ENCODE measurements at regions of chr12 and their contacts with region 1.

Region 1: DNA sequence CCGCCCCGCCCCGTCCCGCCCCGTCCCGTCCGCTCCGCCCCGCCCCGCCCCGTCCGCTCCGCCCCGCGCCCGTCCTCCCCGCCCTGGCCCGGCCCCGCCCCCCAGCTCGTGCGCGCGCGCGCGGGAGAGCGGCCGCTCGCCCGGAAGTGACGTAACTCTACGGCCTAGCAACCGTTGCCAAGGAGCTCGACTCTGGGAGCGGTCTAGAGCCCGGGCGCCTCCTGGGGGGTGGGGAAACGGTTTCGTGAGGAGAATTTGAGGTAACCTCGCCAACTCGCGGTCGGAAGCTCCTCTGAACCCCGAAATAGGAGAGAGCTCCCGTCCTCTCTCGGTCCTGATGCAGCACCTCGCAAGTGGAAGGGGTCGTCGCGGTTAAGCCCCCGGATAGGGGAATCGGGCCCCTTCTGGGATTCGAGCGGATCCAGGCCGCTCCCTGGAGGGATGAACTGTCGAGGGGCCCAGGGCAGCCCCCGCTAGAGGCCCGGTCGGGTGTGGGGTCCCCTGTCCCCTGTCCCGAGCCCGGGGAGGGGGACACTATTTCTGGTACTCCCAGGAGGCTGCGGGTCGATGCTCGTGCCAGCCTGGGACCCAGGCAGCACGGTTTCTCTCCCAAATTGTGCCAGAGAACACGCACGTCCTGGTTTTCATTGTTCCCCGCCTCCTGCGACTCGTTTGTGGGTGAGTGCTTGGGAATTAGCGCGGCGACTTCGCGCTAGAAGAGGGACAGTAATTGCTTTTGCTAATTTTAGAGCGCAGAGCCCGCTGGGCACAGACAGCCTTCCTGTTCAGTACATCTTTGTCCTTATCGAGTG is at the start of gene IFT81:
- DNase-seq: peak; percentile 88 to 97 (median 94)
- H3K4me3 ChIP-seq: peak within 1 kb of the TSS; percentile 66 to 100 (median 95)
- H3K27ac ChIP-seq: peak within 1 kb of the TSS in 58 of 59 donors; percentile 44 to 97 (median 90)
- H3K27me3 ChIP-seq: no peaks in the 10 kb centered on the region
- CTCF ChIP-seq: peak in 22 of 56 donors; percentile 8 to 52 (median 22)
- total RNA-seq, gene IFT81: 12.0 to 29.3 (median 19.0) TPM

Region 2: GRCh38 chr12:110224379-110225304 is 100.3 kb after region 1 on chr12:
- intact Hi-C with region 1: loop called in 1 of 2 experiments (anchors 5 kb)
- DNase-seq: peak in 2 of 10 donors; percentile 20 to 33
- H3K4me3 ChIP-seq: peak overlapping the region; percentile 12 to 68 (median 47)
- H3K27ac ChIP-seq: peak overlapping the region in 57 of 59 donors; percentile 2 to 93 (median 80)
- H3K27me3 ChIP-seq: no peaks in the 10 kb centered on the region
- CTCF ChIP-seq: peak; percentile 35 to 70 (median 56)